B cell (primary cell): ENCODE measurements at regions of chr2 and their contacts with region 1.

Region 1: GRCh38 chr2:96138179-96139145 is at the start of gene ASTL:
- DNase-seq: peak; percentile 81
- ATAC-seq: peak; percentile 63
- H3K4me3 ChIP-seq: no peak within 1 kb of the TSS
- H3K4me3 Mint-ChIP-seq: no peak within 1 kb of the TSS
- H3K27ac ChIP-seq: no peak within 1 kb of the TSS
- H3K27ac Mint-ChIP-seq: peak within 1 kb of the TSS; percentile 41
- H3K4me1 ChIP-seq: peaks cover 10 to 20% of the 10 kb centered on the region in 2 donors
- H3K4me1 Mint-ChIP-seq: peaks cover 27% of the 10 kb centered on the region
- H3K27me3 ChIP-seq: no peaks in the 10 kb centered on the region
- H3K27me3 Mint-ChIP-seq: no peaks in the 10 kb centered on the region
- CTCF ChIP-seq: peak; percentile 67
- total RNA-seq, gene ASTL: 0.41 and 0.59 TPM in 2 replicates

Region 2: DNA sequence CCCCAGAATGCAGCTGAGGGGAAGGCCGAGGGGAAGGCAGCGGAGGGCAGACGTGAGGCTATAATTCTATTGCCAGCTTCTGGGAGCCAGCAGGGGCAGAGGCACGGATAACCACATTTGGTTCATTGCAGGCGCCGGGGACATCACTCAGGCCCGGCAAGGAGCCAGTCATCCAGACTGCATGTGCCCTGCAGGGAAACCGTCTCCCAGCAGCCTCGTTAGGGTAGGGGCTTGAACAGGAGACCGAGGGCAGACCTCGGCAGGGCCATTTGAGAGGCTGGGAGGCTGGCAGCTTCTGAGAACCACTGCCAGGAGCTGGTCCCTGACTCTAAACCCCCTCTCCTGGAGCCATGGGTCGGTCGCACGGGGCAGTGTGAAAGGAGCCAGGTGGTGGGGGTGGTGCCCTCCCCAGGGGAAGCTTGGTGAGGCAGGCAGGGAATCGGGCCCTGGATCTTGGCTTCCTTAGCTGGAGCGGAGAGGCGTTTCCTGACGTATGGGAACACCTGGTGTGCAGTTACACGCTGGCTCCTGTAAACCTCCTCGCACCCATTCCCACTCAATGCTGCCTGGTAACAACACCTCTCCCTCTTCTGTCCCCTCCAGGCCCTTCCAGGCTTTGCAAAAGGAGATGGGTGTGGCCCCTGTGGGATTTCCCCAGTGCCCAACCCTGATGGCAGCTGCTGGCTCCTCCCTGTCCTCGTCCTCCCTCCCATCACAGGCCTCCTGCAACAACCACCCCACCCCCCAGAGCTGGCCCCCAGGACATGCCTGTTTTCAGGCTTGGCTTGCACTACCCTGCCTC is 46.7 kb before region 1 on chr2:
- CTCF ChIA-PET with region 1: no interaction called
- POLR2A ChIA-PET with region 1: no interaction called
- intact Hi-C with region 1: no loop called
- DNase-seq: peak; percentile 3
- ATAC-seq: no peak
- H3K4me3 ChIP-seq: no peak overlapping the region
- H3K4me3 Mint-ChIP-seq: no peak overlapping the region
- H3K27ac ChIP-seq: no peak overlapping the region
- H3K27ac Mint-ChIP-seq: no peak overlapping the region
- H3K4me1 ChIP-seq: no peaks in the 10 kb centered on the region
- H3K4me1 Mint-ChIP-seq: no peaks in the 10 kb centered on the region
- H3K27me3 ChIP-seq: peaks cover 0 to 3% (median 0%) of the 10 kb centered on the region in 4 experiments
- H3K27me3 Mint-ChIP-seq: peaks cover 20% of the 10 kb centered on the region
- CTCF ChIP-seq: no peak

Region 3: DNA sequence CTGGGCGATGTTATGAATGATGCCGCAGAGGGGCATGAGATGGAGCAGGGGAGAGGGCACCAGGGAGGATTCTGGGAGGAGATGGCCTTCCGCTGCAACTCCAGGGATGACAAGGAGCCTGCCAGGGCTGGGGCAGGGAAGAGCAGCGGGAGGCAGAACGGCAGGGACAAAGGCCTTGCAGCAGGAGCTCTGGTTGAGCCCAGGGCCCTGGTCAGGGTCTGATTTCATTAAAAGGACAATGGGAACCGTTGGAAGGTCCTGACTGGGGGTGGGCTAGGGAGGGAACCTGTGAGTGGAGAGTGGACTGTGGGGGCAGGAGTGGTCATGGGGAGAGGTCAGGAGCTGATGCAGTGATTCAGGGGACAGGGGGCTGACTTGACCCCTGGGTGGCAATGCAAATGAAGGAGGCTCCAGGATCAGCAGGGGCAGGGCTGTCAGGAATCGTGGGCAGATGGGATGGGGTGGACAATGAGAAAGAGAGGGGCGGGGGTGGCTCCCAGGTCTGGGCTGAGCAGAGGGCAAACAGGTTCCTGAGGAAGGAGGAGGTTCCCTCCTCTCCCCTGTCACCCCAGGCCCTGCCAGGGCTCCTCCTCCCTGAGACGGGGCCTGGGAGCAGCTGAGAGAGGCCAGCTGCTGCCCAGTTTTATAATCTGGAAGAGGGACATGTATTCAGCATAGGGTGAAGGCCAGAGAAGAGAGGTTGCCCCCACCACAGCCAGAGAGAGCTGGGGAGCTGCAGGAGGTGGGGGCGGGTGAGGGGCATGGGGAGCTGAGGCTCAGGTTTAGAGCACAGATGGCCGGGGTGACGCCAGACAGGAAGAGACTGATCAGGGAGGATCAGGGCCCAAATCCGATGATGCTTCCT is 14.1 kb after region 1 on chr2:
- CTCF ChIA-PET with region 1: interaction called, 35 read pairs
- POLR2A ChIA-PET with region 1: interaction called, 47 read pairs
- intact Hi-C with region 1: no loop called
- DNase-seq: peak; percentile 11
- ATAC-seq: no peak
- H3K4me3 ChIP-seq: no peak overlapping the region
- H3K4me3 Mint-ChIP-seq: no peak overlapping the region
- H3K27ac ChIP-seq: no peak overlapping the region
- H3K27ac Mint-ChIP-seq: peak overlapping the region; percentile 68
- H3K4me1 ChIP-seq: peaks cover 44 to 54% of the 10 kb centered on the region in 2 donors
- H3K4me1 Mint-ChIP-seq: peaks cover 69% of the 10 kb centered on the region
- H3K27me3 ChIP-seq: no peaks in the 10 kb centered on the region
- H3K27me3 Mint-ChIP-seq: no peaks in the 10 kb centered on the region
- CTCF ChIP-seq: no peak

Region 4: GRCh38 chr2:96180521-96180920 is 42.1 kb after region 1 on chr2:
- CTCF ChIA-PET with region 1: interaction called, 1,065 read pairs
- POLR2A ChIA-PET with region 1: no interaction called
- intact Hi-C with region 1: no loop called
- DNase-seq: no peak
- ATAC-seq: no peak
- H3K4me3 ChIP-seq: no peak overlapping the region
- H3K4me3 Mint-ChIP-seq: no peak overlapping the region
- H3K27ac ChIP-seq: no peak overlapping the region
- H3K27ac Mint-ChIP-seq: no peak overlapping the region
- H3K4me1 ChIP-seq: no peaks in the 10 kb centered on the region
- H3K4me1 Mint-ChIP-seq: peaks cover 3% of the 10 kb centered on the region
- H3K27me3 ChIP-seq: no peaks in the 10 kb centered on the region
- H3K27me3 Mint-ChIP-seq: no peaks in the 10 kb centered on the region
- CTCF ChIP-seq: no peak

Region 5: GRCh38 chr2:96233880-96234316 is 95.4 kb after region 1 on chr2:
- CTCF ChIA-PET with region 1: interaction called, 29 read pairs
- POLR2A ChIA-PET with region 1: interaction called, 3 read pairs
- intact Hi-C with region 1: no loop called
- DNase-seq: peak; percentile 70
- ATAC-seq: peak; percentile 98
- H3K4me3 ChIP-seq: no peak overlapping the region
- H3K4me3 Mint-ChIP-seq: peak overlapping the region; percentile 49
- H3K27ac ChIP-seq: no peak overlapping the region
- H3K27ac Mint-ChIP-seq: peak overlapping the region; percentile 88
- H3K4me1 ChIP-seq: peaks cover 15% of the 10 kb centered on the region in 2 donors
- H3K4me1 Mint-ChIP-seq: peaks cover 16% of the 10 kb centered on the region
- H3K27me3 ChIP-seq: no peaks in the 10 kb centered on the region
- H3K27me3 Mint-ChIP-seq: no peaks in the 10 kb centered on the region
- CTCF ChIP-seq: peak; percentile 41

Region 6: GRCh38 chr2:96291751-96292150 is 153.3 kb after region 1 on chr2:
- CTCF ChIA-PET with region 1: no interaction called
- POLR2A ChIA-PET with region 1: no interaction called
- intact Hi-C with region 1: no loop called
- DNase-seq: no peak
- ATAC-seq: no peak
- H3K4me3 ChIP-seq: no peak overlapping the region
- H3K4me3 Mint-ChIP-seq: no peak overlapping the region
- H3K27ac ChIP-seq: no peak overlapping the region
- H3K27ac Mint-ChIP-seq: no peak overlapping the region
- H3K4me1 ChIP-seq: no peaks in the 10 kb centered on the region
- H3K4me1 Mint-ChIP-seq: no peaks in the 10 kb centered on the region
- H3K27me3 ChIP-seq: no peaks in the 10 kb centered on the region
- H3K27me3 Mint-ChIP-seq: no peaks in the 10 kb centered on the region
- CTCF ChIP-seq: no peak

Region 7: DNA sequence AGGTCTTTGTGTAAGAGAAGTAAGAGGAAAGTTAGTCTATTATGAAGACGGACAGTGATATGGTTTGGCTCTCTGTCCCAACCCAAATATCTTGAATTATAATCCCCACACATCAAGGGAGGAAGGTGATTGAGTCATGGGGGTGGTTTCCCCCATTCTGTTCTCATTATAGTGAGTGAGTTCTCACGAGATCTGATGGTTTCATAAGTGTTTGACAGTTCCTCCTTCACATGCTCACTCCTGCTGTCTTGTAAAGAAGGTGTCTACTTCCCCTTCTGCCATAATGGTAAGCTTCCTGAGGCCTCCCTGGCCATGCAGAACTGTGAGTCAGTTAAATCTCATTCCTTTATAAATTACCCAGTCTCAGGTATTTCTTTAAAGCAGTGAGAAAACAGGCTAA is 299.1 kb after region 1 on chr2:
- CTCF ChIA-PET with region 1: no interaction called
- POLR2A ChIA-PET with region 1: no interaction called
- intact Hi-C with region 1: no loop called
- DNase-seq: no peak
- ATAC-seq: no peak
- H3K4me3 ChIP-seq: no peak overlapping the region
- H3K4me3 Mint-ChIP-seq: no peak overlapping the region
- H3K27ac ChIP-seq: no peak overlapping the region
- H3K27ac Mint-ChIP-seq: no peak overlapping the region
- H3K4me1 ChIP-seq: no peaks in the 10 kb centered on the region
- H3K4me1 Mint-ChIP-seq: no peaks in the 10 kb centered on the region
- H3K27me3 ChIP-seq: peaks cover 0 to 6% (median 0%) of the 10 kb centered on the region in 4 experiments
- H3K27me3 Mint-ChIP-seq: peaks cover 16% of the 10 kb centered on the region
- CTCF ChIP-seq: no peak

Region 8: DNA sequence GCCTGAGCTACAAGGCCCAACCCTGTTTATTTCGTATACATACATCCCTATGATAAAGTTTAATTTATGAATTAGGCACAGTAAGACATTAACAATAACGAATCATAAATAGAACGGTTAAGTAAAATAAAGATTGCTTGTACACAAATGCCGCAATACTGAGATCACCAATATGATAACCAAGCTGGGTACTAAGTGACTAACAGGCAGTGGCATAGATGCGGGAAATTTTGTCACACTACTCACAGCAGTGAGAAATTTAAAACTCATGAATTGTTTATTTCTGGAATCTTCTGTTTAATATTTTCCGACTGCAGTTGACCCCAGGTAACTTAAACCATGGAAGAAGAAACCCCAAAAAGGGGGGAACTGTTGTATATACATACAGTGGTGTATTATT is 333.3 kb after region 1 on chr2:
- CTCF ChIA-PET with region 1: no interaction called
- POLR2A ChIA-PET with region 1: no interaction called
- intact Hi-C with region 1: no loop called
- DNase-seq: no peak
- ATAC-seq: no peak
- H3K4me3 ChIP-seq: no peak overlapping the region
- H3K4me3 Mint-ChIP-seq: no peak overlapping the region
- H3K27ac ChIP-seq: no peak overlapping the region
- H3K27ac Mint-ChIP-seq: no peak overlapping the region
- H3K4me1 ChIP-seq: peaks cover 3 to 6% of the 10 kb centered on the region in 2 donors
- H3K4me1 Mint-ChIP-seq: peaks cover 2% of the 10 kb centered on the region
- H3K27me3 ChIP-seq: peaks cover 0 to 13% (median 8%) of the 10 kb centered on the region in 4 experiments
- H3K27me3 Mint-ChIP-seq: peaks cover 7% of the 10 kb centered on the region
- CTCF ChIP-seq: no peak

Region 9: GRCh38 chr2:96509114-96509846 is 370.8 kb after region 1 on chr2:
- CTCF ChIA-PET with region 1: interaction called, 7 read pairs
- POLR2A ChIA-PET with region 1: no interaction called
- intact Hi-C with region 1: loop called (anchors 2 kb)
- DNase-seq: peak; percentile 78
- ATAC-seq: peak; percentile 67
- H3K4me3 ChIP-seq: no peak overlapping the region
- H3K4me3 Mint-ChIP-seq: peak overlapping the region; percentile 78
- H3K27ac ChIP-seq: no peak overlapping the region
- H3K27ac Mint-ChIP-seq: no peak overlapping the region
- H3K4me1 ChIP-seq: peaks cover 18 to 23% of the 10 kb centered on the region in 2 donors
- H3K4me1 Mint-ChIP-seq: peaks cover 18% of the 10 kb centered on the region
- H3K27me3 ChIP-seq: peaks cover 0 to 16% (median 0%) of the 10 kb centered on the region in 4 experiments
- H3K27me3 Mint-ChIP-seq: peaks cover 14% of the 10 kb centered on the region
- CTCF ChIP-seq: peak; percentile 75